Mammary epithelial cell (primary cell): ENCODE measurements at regions of chr9 and their contacts with region 1.

Region 1: GRCh38 chr9:124392871-124393460 is 22.3 kb downstream of the PSMB7 start:
- DNase-seq: peak; percentile 99
- H3K4me3 ChIP-seq: no peak overlapping the region
- H3K27ac ChIP-seq: peak overlapping the region; percentile 43
- H3K4me1 ChIP-seq: peaks cover 32% of the 10 kb centered on the region
- H3K27me3 ChIP-seq: no peaks in the 10 kb centered on the region
- CTCF ChIP-seq: peak; percentile 53 to 57

Region 2: GRCh38 chr9:124489222-124489621 is 96.3 kb after region 1 on chr9:
- CTCF ChIA-PET with region 1: no interaction called
- dilution Hi-C with region 1: loop called (anchors 5 kb)
- in situ Hi-C with region 1: no loop called
- intact Hi-C with region 1: no loop called
- DNase-seq: no peak
- H3K4me3 ChIP-seq: no peak overlapping the region
- H3K27ac ChIP-seq: no peak overlapping the region
- H3K4me1 ChIP-seq: no peaks in the 10 kb centered on the region
- H3K27me3 ChIP-seq: peaks cover 12% of the 10 kb centered on the region
- CTCF ChIP-seq: no peak

Region 3: GRCh38 chr9:124721109-124721906 is 328.3 kb after region 1 on chr9:
- CTCF ChIA-PET with region 1: no interaction called
- dilution Hi-C with region 1: loop called (anchors 10 kb)
- in situ Hi-C with region 1: no loop called
- intact Hi-C with region 1: no loop called
- DNase-seq: no peak
- H3K4me3 ChIP-seq: no peak overlapping the region
- H3K27ac ChIP-seq: no peak overlapping the region
- H3K4me1 ChIP-seq: peaks cover 6% of the 10 kb centered on the region
- H3K27me3 ChIP-seq: no peaks in the 10 kb centered on the region
- CTCF ChIP-seq: no peak